Posterior vena cava (tissue), 2 donors: ENCODE measurements at regions of chr11 and their contacts with region 1.

Region 1: DNA sequence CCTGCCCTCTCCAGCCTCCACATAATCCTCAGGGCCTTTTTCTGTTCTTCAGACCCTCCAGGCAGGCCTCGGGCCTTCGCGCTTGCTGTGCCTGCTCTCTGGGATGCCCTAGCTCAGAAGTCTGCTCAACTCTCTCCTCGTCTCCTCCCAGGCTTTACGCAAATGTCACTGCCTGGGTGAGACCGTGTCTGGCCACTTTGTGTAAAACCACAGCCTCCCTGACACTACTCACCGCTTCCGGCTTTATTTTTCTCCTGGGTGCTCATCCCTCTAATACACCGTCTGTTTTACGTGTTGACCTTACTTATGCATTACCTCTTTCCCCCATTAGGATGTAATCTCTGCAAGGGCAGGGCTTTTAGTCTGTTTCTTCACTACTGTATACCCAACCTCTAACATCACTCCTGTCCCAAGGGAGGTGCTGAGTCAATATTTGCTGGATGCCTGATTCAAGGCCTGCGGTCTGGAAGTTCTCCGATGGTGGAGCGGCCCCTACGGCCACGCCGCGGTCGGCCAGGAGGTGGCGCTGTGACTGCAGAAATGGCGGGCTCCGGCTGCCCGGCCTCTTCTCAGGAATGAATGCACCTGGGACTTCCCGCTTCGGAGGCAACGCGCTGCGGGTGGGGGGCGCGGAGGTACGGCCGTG is 58.2 kb upstream of the THY1 start:
- DNase-seq: peak; percentile 96

Region 2: GRCh38 chr11:119518746-119519730 is 37.9 kb after region 1 on chr11:
- intact Hi-C with region 1: no loop called
- DNase-seq: no peak

Region 3: GRCh38 chr11:119533921-119534736 is 53.0 kb after region 1 on chr11:
- intact Hi-C with region 1: loop called (anchors 2 to 5 kb)
- DNase-seq: peak; percentile 95

Region 4: DNA sequence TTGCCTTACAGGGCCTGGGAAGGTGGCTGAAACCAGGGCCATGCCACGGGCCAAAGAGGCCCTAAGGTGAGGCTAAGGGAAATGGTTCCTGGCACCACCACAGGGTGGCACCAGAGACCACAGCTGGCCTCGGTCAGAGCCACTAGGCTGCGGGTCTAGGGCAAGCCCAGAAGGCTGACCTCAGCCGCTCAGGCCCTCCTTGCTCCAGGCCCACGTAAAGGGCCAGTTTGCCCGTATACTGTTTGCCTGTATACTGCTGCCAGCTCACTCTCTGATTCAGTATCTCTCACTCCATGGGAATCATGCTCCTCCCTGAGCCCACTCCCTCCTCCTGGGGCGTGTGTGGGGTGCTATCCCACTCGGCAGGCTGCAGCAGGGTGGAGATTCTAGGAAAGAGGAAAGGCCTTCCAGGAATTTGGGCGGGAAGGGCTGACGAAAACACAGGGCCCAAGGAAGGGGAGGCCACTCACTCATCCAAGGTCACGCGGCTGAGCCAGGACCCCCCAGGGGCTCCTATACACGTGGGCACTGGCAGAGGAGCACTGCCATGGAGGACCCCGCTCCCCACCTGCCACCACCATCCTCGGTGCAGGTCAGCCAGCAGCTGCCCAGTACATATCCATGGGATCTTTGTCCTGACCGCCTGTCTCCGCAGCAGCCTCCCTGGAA is 185.5 kb after region 1 on chr11:
- intact Hi-C with region 1: loop called in 1 of 2 experiments (anchors 5 kb)
- DNase-seq: peak; percentile 94

Region 5: GRCh38 chr11:119741369-119742262 is 260.5 kb after region 1 on chr11:
- intact Hi-C with region 1: loop called in 1 of 2 experiments (anchors 10 kb)
- DNase-seq: peak; percentile 88

Region 6: GRCh38 chr11:120108154-120108865 is 627.2 kb after region 1 on chr11:
- intact Hi-C with region 1: loop called (anchors 10 kb)
- DNase-seq: peak; percentile 88